ENCODE measurements at regions of chr20 and their contacts with region 1.

Region 1: GRCh38 chr20:50460460-50461267 is 49.5 kb upstream of the PTPN1 start:
- DNase-seq: peak; percentile 84
- H3K4me3 ChIP-seq: no peak overlapping the region
- H3K27ac ChIP-seq: no peak overlapping the region
- H3K4me1 ChIP-seq: no peaks in the 10 kb centered on the region
- H3K27me3 ChIP-seq: no peaks in the 10 kb centered on the region
- CTCF ChIP-seq: peak; percentile 88 to 90
- POLR2A ChIP-seq: no peak

Region 2: GRCh38 chr20:50286609-50287008 is 174.1 kb before region 1 on chr20:
- CTCF ChIA-PET with region 1: no interaction called
- POLR2A ChIA-PET with region 1: no interaction called
- dilution Hi-C with region 1: no loop called
- intact Hi-C with region 1: loop called (anchors 5 kb)
- DNase-seq: peak; percentile 31
- H3K4me3 ChIP-seq: no peak overlapping the region
- H3K27ac ChIP-seq: no peak overlapping the region
- H3K4me1 ChIP-seq: peaks cover 28% of the 10 kb centered on the region
- H3K27me3 ChIP-seq: no peaks in the 10 kb centered on the region
- CTCF ChIP-seq: no peak
- POLR2A ChIP-seq: no peak

Region 3: DNA sequence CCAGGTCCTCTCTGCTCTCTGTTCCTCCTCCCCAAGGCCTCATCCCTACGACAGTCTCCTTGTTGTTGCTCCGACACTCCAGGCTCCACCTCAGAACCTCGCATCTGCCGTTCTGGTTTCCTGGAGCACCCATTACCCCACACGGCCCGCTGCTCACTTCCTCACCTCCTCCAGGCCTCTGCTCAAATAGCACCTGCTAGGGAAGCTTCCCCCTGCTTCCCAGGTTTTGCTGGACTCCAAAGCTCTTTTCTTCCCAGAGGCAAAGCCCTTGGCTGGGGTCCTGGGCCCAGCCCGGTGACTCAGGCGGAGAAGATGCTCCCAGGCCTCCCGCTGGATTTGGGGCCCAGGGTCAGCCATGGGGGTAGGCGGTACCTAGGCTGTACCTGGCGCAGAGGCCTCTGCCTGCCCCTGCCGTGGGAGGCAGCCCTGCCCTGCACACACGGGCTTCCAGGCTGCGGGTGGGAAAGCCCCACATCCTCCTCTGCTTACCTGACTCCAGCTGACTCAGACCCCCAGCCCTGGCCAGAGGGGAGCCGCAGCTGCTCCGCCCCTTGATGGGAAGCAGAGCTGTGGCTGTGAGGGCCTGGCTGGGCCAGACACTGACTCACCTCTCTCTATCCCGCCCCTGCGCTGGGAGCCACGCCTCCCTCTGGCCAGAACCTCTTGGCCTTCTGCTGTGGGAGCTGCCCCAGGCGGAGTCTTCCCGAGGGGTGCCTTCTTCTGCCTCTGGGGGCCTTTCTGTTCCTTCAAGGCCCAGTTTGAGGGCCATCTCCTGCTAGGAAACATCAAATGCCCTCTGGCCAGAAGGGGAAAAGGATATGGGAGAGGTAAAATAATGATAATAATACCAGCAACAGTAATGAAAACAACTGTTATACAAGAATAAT is 139.5 kb before region 1 on chr20:
- CTCF ChIA-PET with region 1: no interaction called
- POLR2A ChIA-PET with region 1: no interaction called
- dilution Hi-C with region 1: no loop called
- intact Hi-C with region 1: no loop called
- DNase-seq: peak; percentile 74
- H3K4me3 ChIP-seq: no peak overlapping the region
- H3K27ac ChIP-seq: no peak overlapping the region
- H3K4me1 ChIP-seq: no peaks in the 10 kb centered on the region
- H3K27me3 ChIP-seq: peaks cover 8 to 12% of the 10 kb centered on the region in 2 experiments
- CTCF ChIP-seq: no peak
- POLR2A ChIP-seq: no peak

Region 4: DNA sequence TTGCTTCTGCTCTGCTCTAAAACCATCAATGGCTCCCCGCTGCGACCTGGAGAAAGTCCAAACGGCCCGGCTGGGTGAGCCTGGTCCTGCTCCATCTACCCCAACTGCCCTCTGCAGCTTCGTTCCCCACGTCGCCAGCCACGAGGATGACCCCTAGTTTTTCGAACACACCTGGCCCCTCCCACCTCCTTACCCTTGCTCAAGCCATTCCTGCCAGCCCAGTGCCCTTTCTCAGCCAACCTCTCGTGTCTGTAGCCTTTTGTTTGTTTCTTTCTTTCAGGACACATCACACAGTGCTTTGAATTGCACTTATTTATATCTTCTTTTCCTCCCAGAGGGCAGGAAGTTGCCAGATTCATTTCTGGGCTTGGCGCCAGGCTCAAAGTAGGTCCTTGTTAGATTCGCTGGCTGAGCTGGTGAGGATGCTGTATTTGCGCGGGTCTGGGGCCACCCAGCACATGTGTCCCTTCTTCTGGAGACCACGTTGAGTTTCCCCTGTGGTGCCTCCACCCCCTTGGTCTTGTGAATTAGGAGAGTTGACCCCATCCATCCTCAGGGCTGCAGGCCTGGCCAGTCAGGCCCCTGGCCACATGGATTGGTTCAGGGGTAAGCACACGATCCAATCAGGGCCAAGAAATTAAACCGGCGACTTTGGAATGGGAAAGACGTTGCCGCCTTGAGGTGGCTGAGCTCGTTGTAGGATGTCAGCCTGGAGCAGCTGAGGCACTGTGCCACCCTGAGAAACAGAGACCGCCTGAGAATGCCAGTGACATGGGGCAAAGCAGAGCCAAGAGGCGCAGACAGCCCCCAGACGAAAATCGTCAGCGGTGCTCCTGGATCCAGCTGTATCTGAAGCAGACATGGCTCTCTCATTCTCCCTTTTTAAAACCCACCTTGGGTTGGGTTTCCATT is 114.0 kb before region 1 on chr20:
- CTCF ChIA-PET with region 1: no interaction called
- POLR2A ChIA-PET with region 1: no interaction called
- dilution Hi-C with region 1: no loop called
- intact Hi-C with region 1: no loop called
- DNase-seq: peak; percentile 81
- H3K4me3 ChIP-seq: no peak overlapping the region
- H3K27ac ChIP-seq: no peak overlapping the region
- H3K4me1 ChIP-seq: peaks cover 21% of the 10 kb centered on the region
- H3K27me3 ChIP-seq: peaks cover 0 to 5% of the 10 kb centered on the region in 2 experiments
- CTCF ChIP-seq: no peak
- POLR2A ChIP-seq: no peak

Region 5: DNA sequence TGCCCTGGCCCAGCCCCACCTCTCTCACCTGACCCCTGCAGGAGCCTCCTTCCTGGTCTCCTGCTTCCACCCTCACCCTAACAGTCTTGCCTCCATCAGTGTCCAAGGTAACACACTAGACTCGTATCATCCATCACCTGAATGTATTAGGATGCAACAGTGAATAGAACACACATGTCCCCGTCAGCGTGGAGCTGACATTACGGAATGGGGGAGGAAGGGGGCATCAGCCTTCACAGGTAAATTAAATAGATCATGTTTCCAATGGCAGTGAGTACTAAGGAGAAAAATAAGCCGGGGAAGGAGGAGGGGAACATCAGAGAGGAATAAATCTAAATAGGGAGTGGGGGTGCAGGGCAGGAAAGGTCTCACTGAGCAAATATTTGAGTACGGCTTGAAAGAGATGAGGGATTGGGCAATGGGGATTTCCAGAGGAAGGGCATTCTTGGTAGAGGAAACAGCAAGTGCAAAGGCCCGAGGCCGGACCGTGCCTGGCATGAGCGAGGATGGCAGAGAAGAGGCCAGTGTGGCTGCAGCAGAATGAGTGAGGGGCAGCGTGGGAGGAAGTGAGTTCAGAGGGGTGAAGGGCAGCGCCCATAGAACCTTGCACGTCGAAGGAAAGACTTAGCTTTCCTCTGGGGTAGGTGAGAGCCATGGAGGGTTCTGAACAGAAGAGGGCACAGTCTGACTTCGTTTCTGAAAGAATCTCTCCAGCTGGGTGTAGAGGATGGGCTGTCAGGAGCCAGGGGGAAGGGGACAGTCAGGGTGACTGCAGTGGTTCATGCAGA is 60.6 kb before region 1 on chr20:
- CTCF ChIA-PET with region 1: interaction called, 5 read pairs
- POLR2A ChIA-PET with region 1: no interaction called
- dilution Hi-C with region 1: no loop called
- intact Hi-C with region 1: loop called (anchors 2 kb)
- DNase-seq: peak; percentile 30
- H3K4me3 ChIP-seq: no peak overlapping the region
- H3K27ac ChIP-seq: no peak overlapping the region
- H3K4me1 ChIP-seq: peaks cover 3% of the 10 kb centered on the region
- H3K27me3 ChIP-seq: peaks cover 3 to 5% of the 10 kb centered on the region in 2 experiments
- CTCF ChIP-seq: no peak
- POLR2A ChIP-seq: no peak

Measured in endothelial cell of umbilical vein (primary cell).